ENCODE measurements at regions of chr3 and their contacts with region 1.

Region 1: GRCh38 chr3:191336833-191337232 is 6.5 kb upstream of the UTS2B start:
- DNase-seq: no peak
- H3K4me3 ChIP-seq: no peak overlapping the region
- H3K27ac ChIP-seq: no peak overlapping the region
- H3K4me1 ChIP-seq: peaks cover 75% of the 10 kb centered on the region
- H3K27me3 ChIP-seq: no peaks in the 10 kb centered on the region
- CTCF ChIP-seq: no peak
- POLR2A ChIP-seq: no peak

Region 2: GRCh38 chr3:191020730-191021396 is 316.0 kb before region 1 on chr3:
- CTCF ChIA-PET with region 1: no interaction called
- POLR2A ChIA-PET with region 1: no interaction called
- dilution Hi-C with region 1: no loop called
- intact Hi-C with region 1: no loop called
- DNase-seq: no peak
- H3K4me3 ChIP-seq: no peak overlapping the region
- H3K27ac ChIP-seq: no peak overlapping the region
- H3K4me1 ChIP-seq: no peaks in the 10 kb centered on the region
- H3K27me3 ChIP-seq: no peaks in the 10 kb centered on the region
- CTCF ChIP-seq: no peak
- POLR2A ChIP-seq: no peak

Region 3: GRCh38 chr3:191356611-191357439 is 20.0 kb after region 1 on chr3:
- CTCF ChIA-PET with region 1: interaction called, 11 read pairs
- POLR2A ChIA-PET with region 1: no interaction called
- dilution Hi-C with region 1: no loop called
- intact Hi-C with region 1: no loop called
- DNase-seq: peak; percentile 73
- H3K4me3 ChIP-seq: peak overlapping the region in 1 of 3 experiments; percentile 9
- H3K27ac ChIP-seq: peak overlapping the region; percentile 55
- H3K4me1 ChIP-seq: peaks cover 64% of the 10 kb centered on the region
- H3K27me3 ChIP-seq: no peaks in the 10 kb centered on the region
- CTCF ChIP-seq: no peak
- POLR2A ChIP-seq: no peak

Region 4: DNA sequence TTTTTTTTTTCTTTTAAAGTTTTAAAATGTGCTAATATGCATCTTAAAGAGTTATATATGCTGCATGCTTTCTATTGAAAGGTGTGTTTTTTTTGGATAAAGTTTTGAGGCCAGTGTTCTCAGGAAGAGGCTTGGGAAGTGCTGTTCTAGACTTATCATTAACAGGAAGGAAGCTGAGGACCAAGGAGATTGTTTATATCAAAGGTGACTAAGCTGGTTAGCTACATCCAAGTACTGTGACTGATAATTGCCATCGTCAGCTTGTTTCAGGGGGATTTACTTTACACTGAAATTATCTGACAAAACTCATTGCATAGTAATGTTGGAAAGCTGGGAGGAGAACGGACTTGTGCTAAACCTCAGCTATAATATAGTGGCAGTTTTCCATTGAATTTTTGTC is 29.8 kb after region 1 on chr3:
- CTCF ChIA-PET with region 1: interaction called, 9 read pairs
- POLR2A ChIA-PET with region 1: no interaction called
- dilution Hi-C with region 1: no loop called
- intact Hi-C with region 1: loop called (anchors 2 kb)
- DNase-seq: peak; percentile 78
- H3K4me3 ChIP-seq: peak overlapping the region in 1 of 3 experiments; percentile 50
- H3K27ac ChIP-seq: peak overlapping the region; percentile 61
- H3K4me1 ChIP-seq: peaks cover 38% of the 10 kb centered on the region
- H3K27me3 ChIP-seq: no peaks in the 10 kb centered on the region
- CTCF ChIP-seq: no peak
- POLR2A ChIP-seq: peak; percentile 61

Region 5: GRCh38 chr3:191388823-191389222 is 52.0 kb after region 1 on chr3:
- CTCF ChIA-PET with region 1: no interaction called
- POLR2A ChIA-PET with region 1: no interaction called
- dilution Hi-C with region 1: no loop called
- intact Hi-C with region 1: no loop called
- DNase-seq: no peak
- H3K4me3 ChIP-seq: no peak overlapping the region
- H3K27ac ChIP-seq: no peak overlapping the region
- H3K4me1 ChIP-seq: no peaks in the 10 kb centered on the region
- H3K27me3 ChIP-seq: no peaks in the 10 kb centered on the region
- CTCF ChIP-seq: peak in 1 of 2 donors; percentile 8
- POLR2A ChIP-seq: no peak

Measured in endothelial cell of umbilical vein (primary cell).